ENCODE measurements at regions of chr19 and their contacts with region 1.

Region 1: GRCh38 chr19:480016-480855 is 16.1 kb upstream of the MADCAM1 start:
- DNase-seq: peak; percentile 84 to 93 (median 87)
- ATAC-seq: peak; percentile 83 to 95 (median 93)
- H3K4me3 ChIP-seq: peak overlapping the region in 10 of 12 donors; percentile 18 to 51 (median 36)
- H3K27ac ChIP-seq: peak overlapping the region in 9 of 12 donors; percentile 14 to 77 (median 46)
- H3K4me1 ChIP-seq: peaks cover 0 to 7% (median 4%) of the 10 kb centered on the region in 12 donors
- H3K27me3 ChIP-seq: peaks cover 0 to 25% (median 3%) of the 10 kb centered on the region in 9 donors
- CTCF ChIP-seq: peak; percentile 43 to 88 (median 76)
- POLR2A ChIP-seq: no peak

Region 2: GRCh38 chr19:377801-378581 is 102.2 kb before region 1 on chr19:
- intact Hi-C with region 1: loop called in 3 of 10 experiments (anchors 2 to 10 kb)
- DNase-seq: peak in 1 of 5 donors; percentile 57
- ATAC-seq: peak in 1 of 4 donors; percentile 10
- H3K4me3 ChIP-seq: no peak overlapping the region
- H3K27ac ChIP-seq: no peak overlapping the region
- H3K4me1 ChIP-seq: peaks cover 0 to 5% (median 0%) of the 10 kb centered on the region in 12 donors
- H3K27me3 ChIP-seq: peaks cover 0 to 37% (median 12%) of the 10 kb centered on the region in 9 donors
- CTCF ChIP-seq: no peak
- POLR2A ChIP-seq: no peak

Region 3: GRCh38 chr19:383922-384798 is 96.1 kb before region 1 on chr19:
- intact Hi-C with region 1: loop called in 8 of 10 experiments (anchors 1 to 10 kb)
- DNase-seq: peak in 1 of 5 donors; percentile 72
- ATAC-seq: peak; percentile 42 to 87 (median 74)
- H3K4me3 ChIP-seq: no peak overlapping the region
- H3K27ac ChIP-seq: no peak overlapping the region
- H3K4me1 ChIP-seq: peaks cover 0 to 4% (median 0%) of the 10 kb centered on the region in 12 donors
- H3K27me3 ChIP-seq: peaks cover 0 to 39% (median 15%) of the 10 kb centered on the region in 9 donors
- CTCF ChIP-seq: peak; percentile 33 to 74 (median 62)
- POLR2A ChIP-seq: no peak

Measured in heart left ventricle (tissue), 16 donors.